IMR-90 (cell line): ENCODE measurements at regions of chr20 and their contacts with region 1.

Region 1: DNA sequence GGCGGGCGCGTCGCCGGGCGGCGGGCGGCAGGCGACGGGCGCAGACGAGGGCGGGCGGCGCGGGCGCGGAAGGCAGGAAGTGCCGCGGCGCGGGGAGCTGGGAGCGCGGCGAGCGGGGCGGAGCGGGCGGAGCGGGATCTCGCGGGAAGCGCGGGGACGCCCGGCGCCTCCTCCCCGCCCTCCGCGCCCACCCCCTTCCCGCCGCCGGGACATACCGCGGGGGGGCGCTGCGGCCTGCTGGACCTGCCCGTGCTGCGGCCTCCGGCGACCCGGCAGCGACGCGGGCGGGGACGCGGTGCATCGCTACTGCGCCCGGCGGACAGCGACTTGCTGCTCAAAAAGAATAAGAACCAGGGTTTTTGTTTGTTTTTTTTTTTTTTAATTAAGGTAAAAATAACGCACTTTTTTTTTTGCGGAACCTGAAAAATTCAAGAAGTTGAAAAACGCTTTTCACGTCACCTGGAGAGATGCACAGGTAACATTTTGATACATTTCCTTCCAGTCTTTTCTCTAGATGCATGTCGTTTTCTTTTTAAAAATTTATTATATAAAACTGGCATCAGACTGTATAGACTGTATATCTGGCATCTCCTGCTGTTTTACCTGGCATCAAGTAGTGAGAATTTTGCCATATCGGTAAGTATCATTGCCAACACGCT is at the start of gene CENPB:
- DNase-seq: peak; percentile 76
- ATAC-seq: peak; percentile 92
- H3K4me3 ChIP-seq: peak within 1 kb of the TSS; percentile 96
- H3K27ac ChIP-seq: peak within 1 kb of the TSS; percentile 92
- H3K4me1 ChIP-seq: peaks cover 16% of the 10 kb centered on the region
- H3K27me3 ChIP-seq: no peaks in the 10 kb centered on the region
- CTCF ChIP-seq: peak; percentile 88
- POLR2A ChIP-seq: no peak
- RAD21 ChIP-seq: peak; percentile 81
- total RNA-seq, gene CENPB: 59.1 and 72.2 TPM in 2 replicates

Region 2: DNA sequence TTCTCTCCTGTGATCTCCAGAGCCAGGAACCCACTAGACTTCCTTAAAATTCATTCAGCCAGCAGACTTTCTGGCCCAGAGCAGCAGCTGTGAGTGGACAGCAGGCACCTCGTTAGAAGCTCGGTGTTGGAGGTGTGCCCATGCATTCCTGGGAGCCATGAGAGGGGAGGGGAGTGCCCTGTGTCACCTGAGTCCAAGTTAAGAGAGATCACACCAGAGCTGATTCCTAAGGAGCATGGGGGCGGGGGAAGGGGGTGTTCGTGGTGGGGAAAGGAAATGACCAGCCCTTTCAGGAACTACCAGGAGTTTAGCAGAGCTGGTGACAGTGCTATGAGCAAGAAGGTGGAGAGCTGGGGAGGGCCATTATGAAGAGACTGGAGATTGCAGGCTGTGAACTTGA is 170.5 kb before region 1 on chr20:
- CTCF ChIA-PET with region 1: no interaction called
- POLR2A ChIA-PET with region 1: no interaction called
- dilution Hi-C with region 1: no loop called
- in situ Hi-C with region 1: no loop called
- intact Hi-C with region 1: no loop called
- DNase-seq: peak; percentile 50
- ATAC-seq: peak; percentile 49
- H3K4me3 ChIP-seq: no peak overlapping the region
- H3K27ac ChIP-seq: no peak overlapping the region
- H3K4me1 ChIP-seq: peaks cover 18% of the 10 kb centered on the region
- H3K27me3 ChIP-seq: no peaks in the 10 kb centered on the region
- CTCF ChIP-seq: no peak
- POLR2A ChIP-seq: no peak
- RAD21 ChIP-seq: no peak

Region 3: DNA sequence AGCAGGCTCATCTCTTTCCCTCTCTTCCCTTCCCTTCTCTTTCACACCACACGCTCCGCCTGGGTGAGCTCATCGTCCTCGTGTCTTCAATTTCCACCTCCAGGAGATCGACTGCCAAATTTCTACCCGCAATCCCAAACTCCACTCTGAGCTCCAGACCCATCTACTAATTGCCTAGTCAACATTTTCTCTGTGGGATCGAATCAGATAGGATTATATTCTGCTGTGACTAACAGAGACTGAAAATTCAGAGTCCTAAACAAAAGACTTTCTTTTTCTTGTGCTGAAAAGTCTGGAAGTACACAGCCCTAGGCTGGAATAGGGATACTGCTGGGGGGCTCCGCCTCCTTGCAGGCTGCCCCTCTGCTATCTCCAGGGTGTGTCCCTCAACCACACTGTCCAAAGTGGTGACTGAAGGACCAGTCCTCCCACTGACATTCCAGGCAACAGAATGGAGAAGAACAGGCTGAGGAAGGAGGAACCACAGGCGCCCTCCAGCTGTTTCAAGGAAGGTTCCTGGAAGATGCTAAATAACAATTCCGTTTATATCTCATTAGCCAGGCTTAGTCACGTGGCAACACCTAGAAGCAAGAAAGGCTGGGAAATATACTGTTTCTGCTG is 59.3 kb before region 1 on chr20:
- CTCF ChIA-PET with region 1: no interaction called
- POLR2A ChIA-PET with region 1: no interaction called
- dilution Hi-C with region 1: no loop called
- in situ Hi-C with region 1: no loop called
- intact Hi-C with region 1: no loop called
- DNase-seq: peak; percentile 15
- ATAC-seq: peak; percentile 57
- H3K4me3 ChIP-seq: no peak overlapping the region
- H3K27ac ChIP-seq: no peak overlapping the region
- H3K4me1 ChIP-seq: no peaks in the 10 kb centered on the region
- H3K27me3 ChIP-seq: peaks cover 58% of the 10 kb centered on the region
- CTCF ChIP-seq: no peak
- POLR2A ChIP-seq: no peak
- RAD21 ChIP-seq: no peak

Region 4: DNA sequence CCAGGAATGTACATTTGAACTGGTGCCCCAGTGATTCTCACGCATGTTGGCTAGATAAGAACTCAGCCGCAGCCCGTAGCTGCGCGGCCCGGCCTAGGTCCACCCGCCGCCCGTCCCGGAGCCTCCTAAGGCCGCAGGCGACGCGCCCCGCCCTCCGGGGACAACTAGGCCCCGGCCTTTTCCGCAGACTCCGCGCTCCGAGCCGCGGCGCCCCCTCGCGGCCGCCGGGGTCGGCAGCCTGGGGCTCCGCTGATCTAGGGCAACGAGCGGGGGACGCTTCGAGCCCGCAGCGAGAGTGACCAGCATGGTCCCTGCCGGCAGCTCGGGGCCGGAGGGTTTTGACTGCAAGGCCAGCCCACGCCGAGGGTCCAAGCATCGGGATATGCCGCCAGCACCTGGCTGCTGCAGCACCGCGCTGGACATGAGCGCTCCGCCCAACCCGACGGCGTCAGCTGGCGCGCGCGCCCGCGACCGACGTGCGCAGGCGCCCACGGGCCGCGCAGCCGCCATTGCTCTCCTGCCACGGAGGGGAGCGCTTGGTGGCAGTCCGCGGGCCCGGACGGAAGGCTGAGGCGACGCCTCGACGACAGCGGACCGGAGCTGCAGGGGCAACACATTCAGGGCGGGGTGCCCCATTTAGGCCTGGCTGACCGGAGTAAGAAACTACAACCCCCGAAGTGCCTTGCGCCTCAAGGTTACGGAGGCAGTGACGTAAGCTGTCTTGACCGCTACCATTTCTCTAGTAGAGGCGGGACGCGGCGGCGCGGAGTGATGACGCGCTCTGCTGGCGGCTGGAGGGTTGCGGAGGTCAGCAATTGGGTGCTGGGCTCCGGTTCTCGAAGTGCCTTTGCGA is 33.5 kb after region 1 on chr20 and contains the start of gene AP5S1:
- CTCF ChIA-PET with region 1: interaction called, 18 read pairs
- POLR2A ChIA-PET with region 1: interaction called, 5 read pairs
- dilution Hi-C with region 1: no loop called
- in situ Hi-C with region 1: no loop called
- intact Hi-C with region 1: loop called (anchors 1 kb)
- DNase-seq: peak; percentile 96
- ATAC-seq: peak; percentile 93
- H3K4me3 ChIP-seq: peak within 1 kb of the TSS; percentile 70
- H3K27ac ChIP-seq: peak within 1 kb of the TSS; percentile 98
- H3K4me1 ChIP-seq: peaks cover 8% of the 10 kb centered on the region; the same call in 1 of the 2 replicates
- H3K27me3 ChIP-seq: no peaks in the 10 kb centered on the region
- CTCF ChIP-seq: peak; percentile 95
- POLR2A ChIP-seq: peak; percentile 90
- RAD21 ChIP-seq: peak; percentile 73
- total RNA-seq, gene AP5S1: 11.4 and 11.7 TPM in 2 replicates

Region 5: DNA sequence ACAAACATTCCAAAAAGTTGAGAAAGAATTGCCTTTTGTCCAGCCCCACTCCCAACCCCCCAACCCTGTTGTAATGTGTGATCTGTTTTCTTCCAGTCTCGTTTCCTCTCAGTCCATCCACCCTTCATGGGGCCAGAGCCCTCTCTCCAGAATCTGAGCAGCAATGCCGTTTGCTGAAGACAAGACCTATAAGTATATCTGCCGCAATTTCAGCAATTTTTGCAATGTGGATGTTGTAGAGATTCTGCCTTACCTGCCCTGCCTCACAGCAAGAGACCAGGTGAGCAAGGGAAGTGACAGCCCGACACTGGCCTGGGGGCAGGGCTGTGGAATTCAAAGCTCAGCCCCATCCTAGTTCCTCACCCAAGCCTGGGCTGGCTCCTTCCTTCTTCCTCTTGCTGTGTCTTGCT is 67.7 kb after region 1 on chr20:
- CTCF ChIA-PET with region 1: no interaction called
- POLR2A ChIA-PET with region 1: interaction called, 3 read pairs
- dilution Hi-C with region 1: no loop called
- in situ Hi-C with region 1: no loop called
- intact Hi-C with region 1: loop called (anchors 1 kb)
- DNase-seq: no peak
- ATAC-seq: no peak; the same call in 1 of the 2 replicates
- H3K4me3 ChIP-seq: no peak overlapping the region
- H3K27ac ChIP-seq: no peak overlapping the region
- H3K4me1 ChIP-seq: no peaks in the 10 kb centered on the region
- H3K27me3 ChIP-seq: no peaks in the 10 kb centered on the region
- CTCF ChIP-seq: no peak
- POLR2A ChIP-seq: no peak
- RAD21 ChIP-seq: no peak

Region 6: DNA sequence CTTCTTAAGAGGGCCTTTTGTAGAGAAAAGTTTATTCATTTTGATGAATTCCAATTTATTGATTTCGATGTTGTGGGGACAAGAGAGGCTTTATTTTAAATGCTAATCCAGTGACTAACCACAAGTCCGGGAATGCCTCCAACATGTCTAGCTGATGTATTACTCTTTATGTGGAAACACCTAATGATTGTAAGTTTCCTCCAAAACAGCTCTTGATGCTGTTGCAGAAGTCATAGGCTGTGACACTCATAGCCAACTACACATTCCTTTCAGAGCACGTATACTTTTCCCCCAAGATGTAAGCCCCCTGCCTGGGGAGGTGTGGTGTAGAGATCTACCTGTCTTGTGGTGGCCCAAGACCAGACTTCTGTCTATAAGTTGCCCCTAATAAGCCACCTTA is 289.9 kb after region 1 on chr20:
- CTCF ChIA-PET with region 1: interaction called, 3 read pairs
- POLR2A ChIA-PET with region 1: no interaction called
- dilution Hi-C with region 1: no loop called
- in situ Hi-C with region 1: loop called (anchors 10 kb)
- intact Hi-C with region 1: loop called (anchors 2 kb)
- DNase-seq: peak; percentile 95
- ATAC-seq: peak; percentile 60
- H3K4me3 ChIP-seq: no peak overlapping the region
- H3K27ac ChIP-seq: peak overlapping the region; percentile 19; the same call in 1 of the 2 replicates
- H3K4me1 ChIP-seq: peaks cover 6% of the 10 kb centered on the region
- H3K27me3 ChIP-seq: no peaks in the 10 kb centered on the region
- CTCF ChIP-seq: no peak
- POLR2A ChIP-seq: no peak
- RAD21 ChIP-seq: no peak

Region 7: GRCh38 chr20:4247898-4248858 is 461.4 kb after region 1 on chr20:
- CTCF ChIA-PET with region 1: no interaction called
- POLR2A ChIA-PET with region 1: no interaction called
- dilution Hi-C with region 1: no loop called
- in situ Hi-C with region 1: no loop called
- intact Hi-C with region 1: no loop called
- DNase-seq: no peak
- ATAC-seq: no peak
- H3K4me3 ChIP-seq: no peak overlapping the region; the same call in 1 of the 2 replicates
- H3K27ac ChIP-seq: no peak overlapping the region
- H3K4me1 ChIP-seq: peaks cover 3% of the 10 kb centered on the region; the same call in 1 of the 2 replicates
- H3K27me3 ChIP-seq: peaks cover 10% of the 10 kb centered on the region; the same call in 1 of the 2 replicates
- CTCF ChIP-seq: no peak
- POLR2A ChIP-seq: no peak
- RAD21 ChIP-seq: no peak